Activated CD4-positive, alpha-beta T cell treated with anti-CD3 and anti-CD28 coated beads for 36 hours (primary cell): ENCODE measurements at regions of chr10 and their contacts with region 1.

Region 1: DNA sequence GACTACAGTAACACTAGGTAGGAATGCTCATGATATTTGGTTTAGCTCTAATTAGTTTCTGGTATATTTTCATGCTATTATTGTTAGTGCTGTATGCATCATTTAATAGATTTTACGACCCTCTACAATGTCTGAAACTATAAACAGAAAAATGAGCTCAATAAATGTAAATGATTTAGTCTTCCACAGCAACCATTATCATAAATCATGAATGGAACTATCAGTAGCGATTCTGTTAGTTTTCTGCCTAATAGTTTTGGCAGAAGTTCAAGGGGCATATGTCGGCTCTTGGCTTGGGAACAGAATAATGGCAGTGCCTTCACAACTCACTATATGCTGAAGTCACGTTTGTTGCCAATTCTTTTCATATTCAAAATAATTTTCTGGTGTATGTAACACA is 494.8 kb downstream of the PARD3 start:
- DNase-seq: no peak
- ATAC-seq: no peak
- H3K4me3 Mint-ChIP-seq: no peak overlapping the region
- H3K27ac Mint-ChIP-seq: no peak overlapping the region
- H3K4me1 Mint-ChIP-seq: no peaks in the 10 kb centered on the region
- H3K27me3 Mint-ChIP-seq: no peaks in the 10 kb centered on the region

Region 2: GRCh38 chr10:34200355-34200901 is 119.8 kb before region 1 on chr10:
- CTCF ChIA-PET with region 1: no interaction called
- POLR2A ChIA-PET with region 1: no interaction called
- intact Hi-C with region 1: no loop called
- DNase-seq: no peak
- ATAC-seq: no peak
- H3K4me3 Mint-ChIP-seq: no peak overlapping the region
- H3K27ac Mint-ChIP-seq: no peak overlapping the region
- H3K4me1 Mint-ChIP-seq: peaks cover 1% of the 10 kb centered on the region
- H3K27me3 Mint-ChIP-seq: no peaks in the 10 kb centered on the region

Region 3: GRCh38 chr10:34254596-34254995 is 65.7 kb before region 1 on chr10:
- CTCF ChIA-PET with region 1: no interaction called
- POLR2A ChIA-PET with region 1: no interaction called
- intact Hi-C with region 1: loop called in 1 of 2 experiments (anchors 2 kb)
- DNase-seq: peak; percentile 54
- ATAC-seq: peak; percentile 87
- H3K4me3 Mint-ChIP-seq: no peak overlapping the region
- H3K27ac Mint-ChIP-seq: no peak overlapping the region
- H3K4me1 Mint-ChIP-seq: no peaks in the 10 kb centered on the region
- H3K27me3 Mint-ChIP-seq: peaks cover 5% of the 10 kb centered on the region